ENCODE measurements at regions of chr5 and their contacts with region 1.

Region 1: GRCh38 chr5:95646554-95647431 is at the start of gene RFESD:
- DNase-seq: peak; percentile 100
- H3K4me3 ChIP-seq: peak within 1 kb of the TSS; percentile 54 to 60 (median 56)
- H3K27ac ChIP-seq: peak within 1 kb of the TSS; percentile 93 to 96 (median 94)
- H3K4me1 ChIP-seq: peaks cover 0 to 11% (median 5%) of the 10 kb centered on the region in 4 donors
- H3K27me3 ChIP-seq: no peaks in the 10 kb centered on the region
- CTCF ChIP-seq: no peak
- EP300 ChIP-seq: peak; percentile 98 to 100 (median 98)
- POLR2A ChIP-seq: peak; percentile 97
- total RNA-seq, gene RFESD: 1.2 to 4.9 (median 2.1) TPM

Region 2: GRCh38 chr5:95712347-95712958 is 65.7 kb after region 1 on chr5:
- intact Hi-C with region 1: no loop called
- DNase-seq: no peak
- H3K4me3 ChIP-seq: no peak overlapping the region
- H3K27ac ChIP-seq: no peak overlapping the region
- H3K4me1 ChIP-seq: peaks cover 0 to 9% (median 4%) of the 10 kb centered on the region in 4 donors
- H3K27me3 ChIP-seq: no peaks in the 10 kb centered on the region
- CTCF ChIP-seq: no peak
- EP300 ChIP-seq: no peak
- POLR2A ChIP-seq: no peak

Region 3: DNA sequence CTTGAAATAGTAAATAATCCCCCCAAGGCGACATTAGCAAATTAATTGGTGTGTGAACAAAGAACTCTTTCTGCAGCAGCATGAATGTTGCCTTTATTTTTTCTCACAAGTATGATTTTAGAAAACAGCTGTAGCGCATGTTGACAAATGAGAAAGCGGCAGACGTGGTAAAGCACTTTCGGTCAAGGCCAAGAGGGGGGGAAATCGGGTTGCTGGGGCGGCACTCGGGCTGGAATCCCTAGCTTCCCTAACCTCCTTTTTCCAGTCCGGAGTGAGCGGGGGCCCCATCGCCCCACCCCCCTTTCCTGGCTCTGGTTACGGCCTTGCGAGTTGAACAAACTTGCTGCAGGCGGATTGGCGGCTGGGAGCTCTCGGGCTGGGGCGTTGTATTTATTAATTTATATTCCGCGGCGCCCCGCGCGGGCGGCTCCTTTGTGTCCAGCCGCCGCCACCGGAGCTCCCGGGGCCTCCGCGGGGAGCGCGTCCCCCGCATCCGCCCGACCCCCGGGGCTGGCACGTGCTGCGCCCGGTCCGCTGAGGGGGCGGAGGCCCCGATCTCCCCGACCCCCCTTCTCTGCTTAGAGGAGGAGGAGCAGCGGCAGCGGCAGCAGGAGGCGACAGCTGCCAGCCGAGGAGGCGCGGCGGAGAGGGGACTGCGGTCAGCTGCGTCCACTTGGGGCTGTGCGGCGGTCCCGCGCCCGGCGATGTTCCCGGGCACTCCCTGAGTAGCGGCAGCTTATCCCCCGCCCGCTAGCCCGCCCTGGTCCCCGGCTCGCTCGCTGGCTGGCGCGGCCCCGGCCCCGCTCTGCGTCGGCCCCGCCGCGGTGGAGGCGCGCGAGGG is 84.2 kb after region 1 on chr5 and contains the start of gene RHOBTB3:
- intact Hi-C with region 1: loop called (anchors 2 kb)
- DNase-seq: peak; percentile 96
- H3K4me3 ChIP-seq: peak within 1 kb of the TSS; percentile 71 to 92 (median 86)
- H3K27ac ChIP-seq: peak within 1 kb of the TSS; percentile 89 to 98 (median 94)
- H3K4me1 ChIP-seq: peaks cover 0 to 61% (median 46%) of the 10 kb centered on the region in 4 donors
- H3K27me3 ChIP-seq: no peaks in the 10 kb centered on the region
- CTCF ChIP-seq: no peak
- EP300 ChIP-seq: peak in 1 of 4 donors; percentile 28
- POLR2A ChIP-seq: peak; percentile 22 to 75
- total RNA-seq, gene RHOBTB3: 75.6 to 151 (median 111) TPM

Region 4: GRCh38 chr5:95781101-95781583 is 134.3 kb after region 1 on chr5:
- intact Hi-C with region 1: loop called (anchors 2 kb)
- DNase-seq: peak; percentile 93
- H3K4me3 ChIP-seq: no peak overlapping the region
- H3K27ac ChIP-seq: peak overlapping the region; percentile 56 to 60 (median 58)
- H3K4me1 ChIP-seq: peaks cover 0 to 14% (median 7%) of the 10 kb centered on the region in 4 donors
- H3K27me3 ChIP-seq: no peaks in the 10 kb centered on the region
- CTCF ChIP-seq: peak; percentile 83 to 92 (median 86)
- EP300 ChIP-seq: no peak
- POLR2A ChIP-seq: no peak

Region 5: GRCh38 chr5:95846554-95847260 is 199.9 kb after region 1 on chr5:
- intact Hi-C with region 1: loop called (anchors 1 kb)
- DNase-seq: peak; percentile 85
- H3K4me3 ChIP-seq: no peak overlapping the region
- H3K27ac ChIP-seq: no peak overlapping the region
- H3K4me1 ChIP-seq: no peaks in the 10 kb centered on the region
- H3K27me3 ChIP-seq: no peaks in the 10 kb centered on the region
- CTCF ChIP-seq: peak; percentile 86 to 93 (median 90)
- EP300 ChIP-seq: no peak
- POLR2A ChIP-seq: no peak

Region 6: DNA sequence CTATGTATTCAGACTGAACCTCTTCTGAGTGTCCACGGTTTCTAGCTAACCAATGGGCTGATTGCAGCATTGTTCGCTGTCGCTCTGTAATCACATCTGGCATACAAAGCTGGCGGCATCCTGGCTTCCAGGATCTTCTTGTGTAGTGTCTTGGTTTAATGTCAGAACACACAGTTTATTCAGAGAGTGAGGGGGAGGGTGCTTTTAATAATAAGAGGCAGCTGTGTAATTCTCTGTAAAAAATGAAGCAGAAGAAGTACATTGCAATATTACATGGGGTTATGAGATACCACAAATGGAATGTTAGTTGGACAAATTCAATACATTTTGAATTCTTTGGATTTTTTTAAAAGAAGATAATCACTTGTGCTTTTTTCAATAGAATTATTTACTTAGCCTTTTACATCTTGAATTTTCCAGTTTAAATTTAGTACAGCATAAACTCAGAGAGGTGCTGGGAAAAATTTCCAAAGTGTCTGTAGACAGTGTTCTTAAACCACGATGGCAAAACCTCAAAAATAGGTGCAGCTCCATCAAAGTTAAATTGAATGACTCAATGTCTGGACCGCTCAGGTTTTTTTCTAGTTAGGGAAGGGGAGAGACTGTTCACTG is 580.3 kb after region 1 on chr5:
- intact Hi-C with region 1: no loop called
- DNase-seq: peak; percentile 70
- H3K4me3 ChIP-seq: no peak overlapping the region
- H3K27ac ChIP-seq: peak overlapping the region in 2 of 4 donors; percentile 20 to 56
- H3K4me1 ChIP-seq: peaks cover 0 to 15% (median 9%) of the 10 kb centered on the region in 4 donors
- H3K27me3 ChIP-seq: no peaks in the 10 kb centered on the region
- CTCF ChIP-seq: no peak
- EP300 ChIP-seq: no peak
- POLR2A ChIP-seq: no peak

Region 7: DNA sequence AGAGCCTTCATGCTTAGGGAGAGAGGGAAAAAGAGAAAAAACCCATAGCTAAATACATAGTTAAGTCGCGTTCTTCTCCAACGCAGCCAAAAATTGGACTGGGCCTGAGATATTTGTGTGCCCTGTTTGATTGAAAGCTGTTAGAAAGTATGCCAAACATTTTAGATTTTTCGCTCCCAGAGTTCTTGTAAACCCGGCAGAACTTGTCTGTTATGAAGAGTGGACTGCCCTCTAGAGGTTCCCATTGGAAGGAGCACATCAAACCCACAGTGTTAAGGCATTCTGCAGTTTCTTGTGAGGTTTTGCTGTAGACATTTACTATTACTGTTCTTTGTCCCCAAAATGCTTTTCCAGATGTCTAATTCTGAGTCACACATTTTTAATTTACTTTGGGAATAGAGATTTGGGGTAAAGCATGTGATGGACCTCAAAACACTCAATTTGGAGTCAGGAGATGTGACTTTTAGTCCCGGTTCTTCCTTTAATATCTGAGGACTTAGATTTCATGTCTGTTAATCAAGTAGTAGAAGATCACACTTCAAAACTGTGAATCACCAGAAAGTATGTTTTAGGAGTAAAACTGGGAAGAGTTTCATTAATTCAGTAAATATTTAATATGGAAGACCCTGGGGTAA is 689.7 kb after region 1 on chr5:
- intact Hi-C with region 1: loop called (anchors 5 kb)
- DNase-seq: peak; percentile 81
- H3K4me3 ChIP-seq: peak overlapping the region in 1 of 4 donors; percentile 20
- H3K27ac ChIP-seq: no peak overlapping the region
- H3K4me1 ChIP-seq: peaks cover 0 to 13% (median 4%) of the 10 kb centered on the region in 4 donors
- H3K27me3 ChIP-seq: no peaks in the 10 kb centered on the region
- CTCF ChIP-seq: peak; percentile 45 to 83 (median 80)
- EP300 ChIP-seq: no peak
- POLR2A ChIP-seq: no peak